GM18951 (cell line): ENCODE measurements at regions of chr1 and their contacts with region 1.

Region 1: DNA sequence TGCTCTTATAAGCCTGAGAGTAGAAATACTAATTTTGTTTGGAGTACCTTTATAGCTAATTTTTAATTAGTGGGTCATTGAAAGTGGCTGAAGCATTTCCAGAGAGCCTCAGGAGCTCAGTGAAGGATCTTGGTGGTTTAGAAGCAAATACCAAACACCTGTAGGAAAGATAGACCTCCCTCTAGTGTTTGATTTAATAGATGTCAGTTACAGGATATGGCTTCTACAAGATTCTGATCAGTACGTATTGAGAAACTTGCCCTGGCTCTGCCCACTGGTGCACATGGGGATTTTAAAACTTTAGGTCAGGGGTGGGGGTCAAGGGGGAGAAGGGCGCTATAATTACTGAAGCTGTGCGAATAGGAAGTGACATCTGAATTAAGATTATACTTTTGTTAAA is 122.2 kb downstream of the POU2F1 start:
- POLR2A ChIP-seq: no peak

Region 2: DNA sequence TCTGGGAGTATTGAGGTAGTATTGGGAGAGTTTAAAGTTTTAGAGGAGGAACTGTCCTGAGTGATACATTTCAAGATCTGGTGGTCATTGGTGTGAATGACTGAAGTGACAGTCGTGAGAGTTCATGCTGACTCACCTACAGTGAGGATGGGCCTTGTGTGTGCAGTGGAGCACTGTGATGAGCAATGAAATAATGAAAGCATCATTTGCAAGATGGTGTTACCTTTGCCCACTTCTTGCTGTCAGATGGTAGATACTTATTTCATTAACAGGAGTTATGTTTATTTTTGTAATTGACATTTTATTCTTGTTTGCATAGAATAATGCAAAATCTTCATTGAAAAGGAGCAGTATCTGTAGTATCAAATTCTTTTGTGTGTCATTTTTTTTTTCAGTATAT is 93.1 kb before region 1 on chr1:
- in situ Hi-C with region 1: no loop called
- POLR2A ChIP-seq: no peak

Region 3: DNA sequence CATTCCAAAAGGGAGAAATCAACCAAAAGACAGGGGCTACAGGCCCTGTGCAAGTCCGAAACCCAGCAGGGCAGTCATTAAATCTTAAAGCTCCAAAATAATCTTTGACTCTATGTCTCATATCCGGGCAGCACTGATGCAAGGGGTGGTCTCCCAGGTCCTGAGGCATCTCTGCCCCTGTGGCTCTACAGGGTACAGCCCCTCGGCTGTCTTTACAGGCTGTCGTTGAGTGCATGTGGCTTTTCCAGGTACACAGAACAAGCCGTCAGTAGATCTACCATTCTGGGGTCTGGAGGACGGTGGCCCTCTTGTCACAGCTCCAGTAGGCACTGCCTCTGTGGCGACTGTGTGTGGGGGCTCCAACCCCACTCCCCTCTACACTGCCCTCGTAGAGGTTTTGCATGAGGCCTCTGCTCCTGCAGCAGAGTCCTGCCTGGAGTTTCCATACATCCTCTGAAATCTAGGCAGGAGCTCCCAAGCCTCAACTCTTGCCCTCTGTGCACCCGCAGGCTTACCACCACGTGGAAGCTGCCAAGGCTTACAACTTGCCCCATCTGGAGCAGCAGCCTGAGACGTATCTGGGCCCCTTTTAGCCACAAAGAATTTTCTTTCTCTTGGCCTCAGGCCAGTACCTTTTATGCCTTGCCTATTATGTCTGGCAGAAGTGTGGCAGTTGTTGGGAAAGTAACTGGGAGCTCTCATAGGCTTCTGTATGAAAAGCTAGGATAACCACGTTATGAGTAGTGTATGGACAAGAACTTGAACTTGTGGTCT is 69.6 kb before region 1 on chr1:
- in situ Hi-C with region 1: loop called (anchors 10 kb)
- POLR2A ChIP-seq: no peak